ENCODE measurements at regions of chr2 and their contacts with region 1.

Region 1: DNA sequence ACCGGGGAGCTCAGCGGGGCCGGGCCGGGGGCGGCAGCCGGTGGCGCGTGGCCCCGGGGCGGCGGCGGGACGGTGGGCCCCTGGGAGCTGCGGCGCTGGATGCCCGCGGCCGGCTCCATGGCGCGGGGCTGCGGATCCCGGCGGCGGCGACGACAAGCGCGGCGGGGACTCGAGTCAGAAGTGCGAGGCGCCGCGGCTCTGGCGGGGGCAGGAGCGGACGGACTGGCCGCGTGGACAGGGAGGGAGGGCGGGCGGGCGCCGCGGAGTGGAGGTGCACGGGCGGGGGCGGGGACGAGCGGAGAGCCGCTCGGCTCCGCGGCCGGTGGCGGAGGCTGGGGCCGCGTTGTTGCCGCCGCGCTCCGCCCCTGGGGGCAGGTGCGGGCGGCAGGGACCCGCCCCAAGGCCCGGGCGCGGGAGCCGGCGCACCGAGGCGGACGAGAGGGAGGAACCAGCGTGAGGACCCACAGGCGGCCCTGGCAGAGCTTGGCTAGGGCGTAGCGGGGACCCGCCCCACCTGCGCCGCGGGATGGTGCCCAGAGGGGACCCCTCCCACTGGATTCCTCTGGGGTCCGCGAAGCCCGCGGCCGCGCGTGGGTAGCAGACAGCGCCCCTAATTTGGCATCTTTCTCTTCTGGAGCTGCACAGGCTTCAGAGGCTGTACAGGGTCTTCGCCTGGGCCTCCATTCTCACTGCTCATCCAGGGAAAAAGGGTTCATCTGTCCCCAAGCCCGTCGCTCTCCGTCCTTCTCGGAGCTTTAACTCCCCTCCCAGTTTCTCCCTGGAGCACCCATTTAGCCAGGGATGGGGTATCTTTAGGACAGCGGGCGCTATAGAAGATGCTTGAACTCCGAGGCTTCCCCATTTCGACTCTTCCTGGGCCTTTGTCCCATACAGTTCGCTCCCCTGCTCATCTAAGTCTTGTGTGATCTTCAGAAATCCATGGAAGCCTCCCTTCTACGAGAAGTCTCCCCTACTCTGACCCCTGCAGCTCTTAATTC is at the start of gene TMEM163:
- DNase-seq: no peak
- H3K4me3 Mint-ChIP-seq: peak within 1 kb of the TSS; percentile 43
- H3K27ac Mint-ChIP-seq: no peak within 1 kb of the TSS
- H3K4me1 Mint-ChIP-seq: peaks cover 10% of the 10 kb centered on the region
- H3K27me3 Mint-ChIP-seq: peaks cover 65% of the 10 kb centered on the region
- total RNA-seq, gene TMEM163: 0.09 and 0.27 TPM in 2 replicates

Region 2: GRCh38 chr2:133927894-133928464 is 791.1 kb before region 1 on chr2:
- intact Hi-C with region 1: no loop called
- DNase-seq: no peak
- H3K4me3 Mint-ChIP-seq: no peak overlapping the region
- H3K27ac Mint-ChIP-seq: no peak overlapping the region
- H3K4me1 Mint-ChIP-seq: no peaks in the 10 kb centered on the region
- H3K27me3 Mint-ChIP-seq: no peaks in the 10 kb centered on the region

Region 3: GRCh38 chr2:134564549-134564948 is 154.6 kb before region 1 on chr2:
- intact Hi-C with region 1: loop called (anchors 10 kb)
- DNase-seq: no peak
- H3K4me3 Mint-ChIP-seq: no peak overlapping the region
- H3K27ac Mint-ChIP-seq: no peak overlapping the region
- H3K4me1 Mint-ChIP-seq: peaks cover 7% of the 10 kb centered on the region
- H3K27me3 Mint-ChIP-seq: peaks cover 19% of the 10 kb centered on the region

Region 4: DNA sequence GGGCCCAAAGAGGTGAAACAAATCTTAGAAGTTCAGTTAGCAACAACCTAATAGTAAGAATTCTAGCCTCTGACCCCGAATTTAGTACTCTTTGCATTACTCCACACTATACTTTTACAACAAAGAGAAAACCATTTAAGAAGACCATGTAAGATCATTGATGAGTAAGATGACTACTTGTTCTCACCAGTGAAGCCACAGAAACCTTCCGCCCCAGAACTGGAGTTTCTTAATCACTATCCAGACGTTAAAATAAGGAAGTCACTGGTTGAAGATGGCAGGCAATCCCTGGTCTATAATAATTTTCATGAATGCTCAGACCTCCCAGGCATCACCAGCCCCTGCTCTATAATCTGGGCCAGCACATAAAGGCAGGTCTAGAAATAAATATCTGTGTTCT is 95.3 kb before region 1 on chr2:
- intact Hi-C with region 1: loop called (anchors 5 kb)
- DNase-seq: peak; percentile 11
- H3K4me3 Mint-ChIP-seq: no peak overlapping the region
- H3K27ac Mint-ChIP-seq: no peak overlapping the region
- H3K4me1 Mint-ChIP-seq: peaks cover 13% of the 10 kb centered on the region
- H3K27me3 Mint-ChIP-seq: peaks cover 5% of the 10 kb centered on the region

Region 5: GRCh38 chr2:134668821-134669220 is 50.3 kb before region 1 on chr2:
- intact Hi-C with region 1: loop called (anchors 10 kb)
- DNase-seq: peak; percentile 76
- H3K4me3 Mint-ChIP-seq: no peak overlapping the region
- H3K27ac Mint-ChIP-seq: peak overlapping the region; percentile 28
- H3K4me1 Mint-ChIP-seq: peaks cover 67% of the 10 kb centered on the region
- H3K27me3 Mint-ChIP-seq: peaks cover 33% of the 10 kb centered on the region

Region 6: DNA sequence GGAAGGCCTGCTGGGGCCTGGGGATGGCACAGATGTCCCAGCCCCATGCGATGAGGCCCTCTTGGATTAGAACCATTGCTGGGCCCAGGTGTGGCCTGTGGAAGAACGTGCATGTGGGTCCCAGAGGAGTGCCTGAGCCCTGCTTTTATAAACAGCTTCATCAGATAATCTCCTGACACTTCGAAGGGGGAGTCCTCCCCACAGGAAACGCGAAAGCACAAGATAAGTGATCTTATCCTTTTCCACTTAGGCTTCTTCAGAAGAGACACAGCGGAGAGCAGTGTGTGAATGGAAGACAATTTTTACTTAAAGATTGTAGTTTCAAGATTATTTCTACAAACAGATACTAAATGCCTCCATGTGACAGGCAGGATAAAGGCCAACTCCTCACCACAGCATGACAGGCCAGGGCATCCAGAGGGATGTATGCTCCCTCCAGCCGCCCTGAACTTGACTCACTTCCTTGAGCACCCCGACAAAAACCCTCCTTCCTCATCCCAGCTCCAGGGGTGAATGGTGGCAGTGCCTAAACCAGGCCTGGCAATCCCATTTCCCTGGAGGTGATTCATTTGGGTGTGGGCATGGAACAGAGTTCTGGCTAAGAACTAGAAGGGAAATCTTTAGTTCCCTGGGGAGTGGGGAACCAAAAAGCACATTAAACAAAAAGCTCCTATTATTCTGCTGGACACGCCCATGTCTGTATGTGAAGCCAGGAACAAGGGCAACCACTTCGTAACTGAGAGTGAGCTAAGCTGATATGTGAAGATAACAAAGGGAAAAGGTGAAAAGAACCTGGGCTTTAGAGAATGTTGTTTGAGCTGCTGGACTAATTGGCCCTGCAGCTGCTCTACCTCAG is 55.9 kb after region 1 on chr2:
- intact Hi-C with region 1: loop called (anchors 2 kb)
- DNase-seq: no peak
- H3K4me3 Mint-ChIP-seq: no peak overlapping the region
- H3K27ac Mint-ChIP-seq: peak overlapping the region; percentile 51
- H3K4me1 Mint-ChIP-seq: peaks cover 17% of the 10 kb centered on the region
- H3K27me3 Mint-ChIP-seq: peaks cover 9% of the 10 kb centered on the region

Region 7: DNA sequence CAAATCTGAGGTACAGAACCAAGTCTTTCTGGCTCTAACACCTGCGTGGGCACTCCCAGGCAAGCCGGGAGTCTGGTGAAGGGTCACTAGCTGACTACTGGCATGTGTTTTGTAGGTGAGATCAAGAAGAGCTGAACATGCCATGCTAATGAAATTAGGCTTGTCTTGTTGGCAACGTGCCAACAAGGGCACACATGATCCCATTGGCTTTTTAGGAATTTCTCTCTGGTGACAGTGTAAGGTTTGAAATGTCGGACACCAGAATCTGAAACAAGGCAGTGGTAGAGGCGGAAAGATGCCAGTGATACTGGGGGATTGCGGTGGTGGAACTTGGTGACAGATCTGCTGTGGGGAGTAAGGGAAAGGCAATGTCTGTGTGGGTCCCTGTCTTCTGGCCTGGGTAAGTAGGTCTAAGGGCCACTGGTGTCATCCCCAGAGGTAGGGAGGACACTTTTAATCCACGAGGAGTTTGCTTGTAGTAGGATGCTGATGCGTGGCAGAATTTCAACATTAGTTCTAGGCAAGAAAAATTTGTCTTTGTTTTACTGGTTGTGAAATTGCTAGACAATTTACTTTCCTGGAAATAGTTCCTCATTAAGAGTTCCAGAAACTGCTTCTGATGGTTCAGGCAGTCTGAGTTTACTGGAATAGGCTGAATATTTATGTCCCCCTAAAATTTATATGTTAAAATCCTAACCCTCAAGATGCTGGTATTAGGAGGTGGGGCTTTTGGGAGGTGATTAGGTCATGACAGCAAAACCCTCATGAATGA is 66.7 kb after region 1 on chr2:
- intact Hi-C with region 1: no loop called
- DNase-seq: no peak
- H3K4me3 Mint-ChIP-seq: no peak overlapping the region
- H3K27ac Mint-ChIP-seq: no peak overlapping the region
- H3K4me1 Mint-ChIP-seq: peaks cover 5% of the 10 kb centered on the region
- H3K27me3 Mint-ChIP-seq: peaks cover 15% of the 10 kb centered on the region

Measured in activated T-helper 2 cell treated with anti-CD3 and anti-CD28 coated beads, Interferon-gamma antibody, Interleukin-2, Interleukin-4, amounts not matched to agents 10 μg/mL and 5 μg/mL and 100 μg/mL, durations not matched to agents 14 hours and 24 hours and 36 hours (primary cell).